CD8-positive, alpha-beta T cell (primary cell): ENCODE measurements at regions of chr2 and their contacts with region 1.

Region 1: GRCh38 chr2:24620936-24621335 is 129.9 kb downstream of the NCOA1 start:
- DNase-seq: no peak
- ATAC-seq: no peak
- H3K4me3 ChIP-seq: no peak overlapping the region
- H3K4me3 Mint-ChIP-seq: no peak overlapping the region
- H3K27ac ChIP-seq: no peak overlapping the region
- H3K27ac Mint-ChIP-seq: no peak overlapping the region
- H3K4me1 ChIP-seq: no peaks in the 10 kb centered on the region
- H3K4me1 Mint-ChIP-seq: peaks cover 52% of the 10 kb centered on the region
- H3K27me3 ChIP-seq: no peaks in the 10 kb centered on the region
- H3K27me3 Mint-ChIP-seq: no peaks in the 10 kb centered on the region
- CTCF ChIP-seq: no peak

Region 2: GRCh38 chr2:24643051-24643450 is 22.1 kb after region 1 on chr2:
- CTCF ChIA-PET with region 1: no interaction called
- POLR2A ChIA-PET with region 1: no interaction called
- intact Hi-C with region 1: loop called in 1 of 2 experiments (anchors 1 kb)
- DNase-seq: no peak
- ATAC-seq: no peak
- H3K4me3 ChIP-seq: no peak overlapping the region
- H3K4me3 Mint-ChIP-seq: no peak overlapping the region
- H3K27ac ChIP-seq: no peak overlapping the region
- H3K27ac Mint-ChIP-seq: no peak overlapping the region
- H3K4me1 ChIP-seq: no peaks in the 10 kb centered on the region
- H3K4me1 Mint-ChIP-seq: peaks cover 30% of the 10 kb centered on the region
- H3K27me3 ChIP-seq: no peaks in the 10 kb centered on the region
- H3K27me3 Mint-ChIP-seq: no peaks in the 10 kb centered on the region
- CTCF ChIP-seq: no peak